MCF 10A (cell line): ENCODE measurements at regions of chr11 and their contacts with region 1.

Region 1: DNA sequence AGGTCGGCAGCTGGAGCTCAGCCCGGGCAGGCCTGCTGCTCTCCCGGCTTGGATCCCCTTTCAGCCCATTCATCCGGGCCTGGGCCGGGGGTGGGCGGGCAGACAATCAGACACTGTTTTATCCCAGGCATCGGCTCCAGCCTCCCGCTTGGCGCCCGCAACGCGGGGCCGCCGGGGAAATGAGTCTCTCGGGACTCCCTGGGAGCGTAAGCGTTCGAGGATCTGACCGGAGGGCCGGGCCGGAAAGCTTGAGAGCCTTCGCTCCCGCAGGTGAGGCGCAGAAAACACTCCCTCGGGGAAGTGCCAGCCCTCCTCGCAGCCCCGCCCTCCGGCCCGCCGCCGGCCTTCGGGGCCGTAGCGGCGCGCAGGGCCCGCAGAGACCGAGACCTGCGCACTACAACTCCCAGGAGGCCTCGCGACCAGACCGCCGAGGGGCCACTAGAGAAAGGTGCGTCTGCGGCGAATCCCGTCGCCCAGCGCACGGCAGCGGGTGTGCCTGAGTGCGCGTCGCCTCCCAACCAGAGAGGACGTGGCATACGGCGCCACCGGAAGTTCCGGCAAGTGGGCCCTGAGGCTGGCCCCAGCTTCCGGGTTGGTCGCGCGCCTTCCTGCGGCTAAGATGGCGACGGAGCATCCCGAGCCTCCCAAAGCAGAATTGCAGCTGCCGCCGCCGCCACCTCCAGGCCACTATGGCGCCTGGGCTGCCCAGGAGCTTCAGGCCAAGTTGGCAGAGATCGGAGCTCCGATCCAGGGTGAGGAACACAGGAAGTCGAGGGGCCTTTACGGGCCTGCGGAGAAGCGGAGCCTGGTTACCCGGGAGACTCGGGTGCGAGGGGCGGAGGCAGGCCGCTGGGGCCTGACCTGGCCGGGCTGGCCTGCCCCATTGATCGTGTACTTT is at the start of gene SF3B2:
- DNase-seq: peak; percentile 98
- H3K4me3 Mint-ChIP-seq: peak within 1 kb of the TSS; percentile 97
- H3K27ac Mint-ChIP-seq: peak within 1 kb of the TSS; percentile 91
- H3K4me1 Mint-ChIP-seq: peaks cover 5% of the 10 kb centered on the region
- H3K27me3 Mint-ChIP-seq: no peaks in the 10 kb centered on the region
- CTCF ChIP-seq: no peak
- total RNA-seq, gene SF3B2: 241 and 317 TPM in 2 replicates

Region 2: DNA sequence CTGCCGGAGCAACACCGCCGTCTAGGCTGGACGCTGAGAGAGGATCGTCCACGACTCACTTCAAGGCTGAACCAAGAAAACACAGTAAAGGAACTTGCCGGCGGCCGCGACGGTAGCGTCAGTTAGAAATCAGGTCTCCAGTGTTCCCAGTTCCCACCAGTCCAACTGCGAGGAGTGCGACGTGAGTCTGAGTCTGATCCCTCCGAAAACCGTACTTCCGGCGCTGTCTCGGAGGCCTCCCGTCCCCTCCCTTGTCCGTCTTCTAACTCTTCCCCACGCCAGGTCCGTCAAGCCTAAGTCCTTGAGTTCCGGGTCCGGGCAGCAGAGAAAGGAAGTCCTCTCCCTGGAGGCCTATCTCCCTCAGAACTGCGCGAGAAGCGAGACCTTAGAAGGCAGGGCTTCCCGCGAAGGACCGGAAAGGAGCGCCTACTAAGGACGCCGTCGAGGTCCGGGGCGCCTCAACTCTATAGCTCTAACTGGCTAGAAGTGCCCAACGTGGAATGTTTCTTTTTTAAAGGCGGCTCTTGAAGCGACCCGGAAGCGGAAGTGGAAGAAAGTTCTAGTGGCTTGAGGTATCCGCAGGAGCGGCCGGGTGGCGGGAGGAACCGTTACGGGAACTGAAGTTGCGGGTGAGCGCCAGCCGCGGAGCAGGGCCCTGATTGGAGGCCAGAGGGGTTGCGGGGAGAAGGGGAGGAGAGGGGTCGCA is 49.9 kb before region 1 on chr11 and contains the starts of genes BANF1 and EIF1AD:
- CTCF ChIA-PET with region 1: interaction called, 4 read pairs
- POLR2A ChIA-PET with region 1: interaction called, 42 read pairs
- intact Hi-C with region 1: loop called (anchors 10 kb)
- DNase-seq: peak; percentile 99
- H3K4me3 Mint-ChIP-seq: peak within 1 kb of the TSS; percentile 97
- H3K27ac Mint-ChIP-seq: peak within 1 kb of the TSS; percentile 96
- H3K4me1 Mint-ChIP-seq: no peaks in the 10 kb centered on the region
- H3K27me3 Mint-ChIP-seq: no peaks in the 10 kb centered on the region
- CTCF ChIP-seq: no peak
- total RNA-seq, gene BANF1: 154 and 198 TPM in 2 replicates
- total RNA-seq, gene EIF1AD: 21.7 and 33.5 TPM in 2 replicates

Region 3: DNA sequence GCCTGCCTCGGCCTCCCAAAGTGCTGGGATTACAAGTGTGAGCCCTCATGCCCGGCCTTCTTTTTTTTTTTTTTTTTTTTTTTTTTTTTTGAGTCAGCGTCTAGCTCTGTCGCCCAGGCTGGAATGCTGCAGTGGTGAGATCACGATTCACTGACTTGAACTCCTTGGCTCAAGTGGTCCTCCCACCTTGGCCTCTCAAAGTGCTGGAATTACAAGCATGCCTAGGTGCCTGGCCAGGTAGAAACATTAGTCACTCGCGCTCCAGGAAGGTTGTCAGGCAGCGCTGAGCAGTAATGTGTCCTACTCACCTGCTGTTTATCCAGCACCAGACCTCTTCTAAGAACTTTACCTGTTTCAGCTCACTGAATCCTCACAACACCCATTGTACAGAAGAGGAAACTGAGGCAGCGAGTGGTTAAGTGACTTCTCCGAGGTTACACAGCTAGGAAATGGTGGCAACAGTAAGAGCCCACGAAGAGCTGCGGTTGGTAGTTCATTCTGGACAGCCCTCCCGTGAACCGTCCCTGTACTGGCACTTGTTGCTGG is 40.7 kb before region 1 on chr11:
- CTCF ChIA-PET with region 1: interaction called, 3 read pairs
- POLR2A ChIA-PET with region 1: interaction called, 16 read pairs
- intact Hi-C with region 1: loop called (anchors 10 kb)
- DNase-seq: peak; percentile 86
- H3K4me3 Mint-ChIP-seq: no peak overlapping the region
- H3K27ac Mint-ChIP-seq: peak overlapping the region; percentile 9
- H3K4me1 Mint-ChIP-seq: peaks cover 20% of the 10 kb centered on the region
- H3K27me3 Mint-ChIP-seq: no peaks in the 10 kb centered on the region
- CTCF ChIP-seq: no peak

Region 4: GRCh38 chr11:66081505-66081904 is 29.5 kb after region 1 on chr11:
- CTCF ChIA-PET with region 1: interaction called, 3 read pairs
- POLR2A ChIA-PET with region 1: interaction called, 15 read pairs
- intact Hi-C with region 1: no loop called
- DNase-seq: peak; percentile 62
- H3K4me3 Mint-ChIP-seq: peak overlapping the region; percentile 35
- H3K27ac Mint-ChIP-seq: peak overlapping the region; percentile 87
- H3K4me1 Mint-ChIP-seq: peaks cover 44% of the 10 kb centered on the region
- H3K27me3 Mint-ChIP-seq: no peaks in the 10 kb centered on the region
- CTCF ChIP-seq: no peak